ENCODE measurements at regions of chr18 and their contacts with region 1.

Region 1: GRCh38 chr18:22563098-22563707 is 145.5 kb upstream of the CTAGE1 start:
- DNase-seq: peak; percentile 68 to 84 (median 74)
- ATAC-seq: peak; percentile 78
- H3K4me3 ChIP-seq: no peak overlapping the region
- H3K27ac ChIP-seq: no peak overlapping the region
- H3K4me1 ChIP-seq: peaks cover 9 to 16% of the 10 kb centered on the region in 2 experiments
- H3K27me3 ChIP-seq: peaks cover 0 to 6% of the 10 kb centered on the region in 2 experiments; a peak in 2 of 5 replicates
- CTCF ChIP-seq: peak; percentile 85 to 93 (median 88)
- EP300 ChIP-seq: no peak
- POLR2A ChIP-seq: no peak
- RAD21 ChIP-seq: peak; percentile 97 to 100

Region 2: GRCh38 chr18:21897811-21898210 is 665.4 kb before region 1 on chr18:
- CTCF ChIA-PET with region 1: no interaction called
- POLR2A ChIA-PET with region 1: no interaction called
- in situ Hi-C with region 1: loop called (anchors 25 kb)
- intact Hi-C with region 1: loop called (anchors 5 kb)
- DNase-seq: peak; percentile 55 to 68 (median 60)
- ATAC-seq: peak; percentile 90
- H3K4me3 ChIP-seq: no peak overlapping the region
- H3K27ac ChIP-seq: no peak overlapping the region
- H3K4me1 ChIP-seq: peaks cover 0 to 6% of the 10 kb centered on the region in 2 experiments; a peak in 2 of 5 replicates
- H3K27me3 ChIP-seq: peaks cover 2 to 6% of the 10 kb centered on the region in 2 experiments; a peak in 2 of 5 replicates
- CTCF ChIP-seq: peak; percentile 77 to 80 (median 78)
- EP300 ChIP-seq: no peak
- POLR2A ChIP-seq: no peak
- RAD21 ChIP-seq: peak; percentile 36 to 82; a peak in 3 of 4 replicates

Region 3: DNA sequence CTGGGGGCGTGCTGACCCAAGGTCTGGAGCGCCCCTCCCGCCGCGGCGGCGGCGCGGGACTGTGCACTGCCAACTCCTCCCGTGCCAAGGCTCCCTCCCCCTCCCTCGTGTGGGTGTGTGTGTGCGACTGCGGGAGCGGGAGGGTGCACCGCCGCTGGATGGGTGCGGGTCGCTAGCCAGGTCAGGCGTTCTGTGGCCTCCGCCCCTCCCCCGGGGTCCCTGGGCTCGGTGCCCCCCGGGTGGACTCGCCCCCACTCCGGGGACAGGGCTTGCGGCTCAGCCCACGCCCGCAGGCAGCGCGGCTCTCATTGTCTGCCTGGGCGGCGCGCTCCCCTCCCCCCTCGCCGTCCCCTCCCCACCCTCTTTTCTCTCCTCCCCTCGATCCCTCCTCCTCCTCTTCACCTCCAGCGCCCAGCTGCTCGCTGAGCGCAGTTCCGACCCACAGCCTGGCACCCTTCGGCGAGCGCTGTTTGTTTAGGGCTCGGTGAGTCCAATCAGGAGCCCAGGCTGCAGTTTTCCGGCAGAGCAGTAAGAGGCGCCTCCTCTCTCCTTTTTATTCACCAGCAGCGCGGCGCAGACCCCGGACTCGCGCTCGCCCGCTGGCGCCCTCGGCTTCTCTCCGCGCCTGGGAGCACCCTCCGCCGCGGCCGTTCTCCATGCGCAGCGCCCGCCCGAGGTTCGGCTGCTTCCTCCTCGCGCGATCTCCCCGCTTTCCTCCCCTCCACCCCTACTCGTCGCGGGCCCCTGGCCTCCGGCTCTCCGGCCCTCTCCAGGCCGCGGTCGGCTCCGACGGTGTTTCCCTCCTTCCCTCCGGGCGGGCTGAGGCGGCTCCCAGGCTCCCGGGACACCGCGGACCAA is 394.0 kb before region 1 on chr18 and contains the start of gene GATA6:
- CTCF ChIA-PET with region 1: no interaction called
- POLR2A ChIA-PET with region 1: no interaction called
- in situ Hi-C with region 1: no loop called
- intact Hi-C with region 1: loop called (anchors 2 kb)
- DNase-seq: peak; percentile 73 to 80 (median 76)
- ATAC-seq: peak; percentile 93
- H3K4me3 ChIP-seq: peak within 1 kb of the TSS; percentile 45
- H3K27ac ChIP-seq: no peak within 1 kb of the TSS
- H3K4me1 ChIP-seq: peaks cover 11 to 34% of the 10 kb centered on the region in 2 experiments
- H3K27me3 ChIP-seq: peaks cover 45 to 66% of the 10 kb centered on the region in 2 experiments
- CTCF ChIP-seq: peak; percentile 54 to 79 (median 63)
- EP300 ChIP-seq: no peak
- POLR2A ChIP-seq: no peak
- RAD21 ChIP-seq: peak; percentile 45 to 78
- polyA plus RNA-seq, gene GATA6: 0.01 TPM in 1 of 2 experiments, not detected in the other

Region 4: DNA sequence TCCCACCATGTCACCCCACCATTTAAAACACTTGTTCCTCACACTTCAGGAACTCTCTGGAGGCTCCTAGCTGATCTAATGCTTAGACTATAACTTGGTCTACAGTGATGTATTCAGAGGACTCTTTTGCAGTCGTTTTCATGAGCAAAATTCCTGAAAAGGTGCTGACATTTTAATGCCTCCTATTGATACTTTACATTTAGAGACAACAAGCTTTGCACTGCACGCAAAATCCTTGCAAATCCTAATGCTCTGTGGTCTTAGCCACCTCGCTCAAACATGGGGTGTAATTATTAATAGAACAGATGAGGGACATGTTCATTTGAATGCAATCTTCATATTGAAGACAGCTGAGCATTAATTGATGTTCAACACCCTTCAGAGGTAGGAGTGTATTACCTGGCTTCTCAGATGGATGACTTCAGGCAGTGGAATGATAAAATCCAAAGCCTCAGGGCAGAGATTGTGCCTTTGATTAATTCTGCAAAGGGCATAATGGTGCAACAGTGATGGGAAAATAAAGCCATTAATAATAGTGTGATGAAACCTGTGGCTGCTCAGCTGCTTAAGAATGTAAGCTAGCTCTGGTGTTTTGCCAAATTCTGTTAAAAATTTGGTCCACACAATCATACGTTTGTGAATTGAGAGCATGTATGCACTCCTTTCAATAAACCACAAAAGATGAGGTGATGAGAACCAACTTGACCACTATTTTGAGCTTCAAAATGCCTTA is 150.9 kb before region 1 on chr18:
- CTCF ChIA-PET with region 1: no interaction called
- POLR2A ChIA-PET with region 1: no interaction called
- in situ Hi-C with region 1: no loop called
- intact Hi-C with region 1: loop called (anchors 10 kb)
- DNase-seq: no peak
- ATAC-seq: no peak
- H3K4me3 ChIP-seq: no peak overlapping the region
- H3K27ac ChIP-seq: no peak overlapping the region
- H3K4me1 ChIP-seq: no peaks in the 10 kb centered on the region
- H3K27me3 ChIP-seq: peaks cover 9 to 20% of the 10 kb centered on the region in 2 experiments; a peak in 3 of 5 replicates
- CTCF ChIP-seq: no peak
- EP300 ChIP-seq: no peak
- POLR2A ChIP-seq: no peak
- RAD21 ChIP-seq: no peak

Region 5: GRCh38 chr18:22465859-22466457 is 97.2 kb before region 1 on chr18:
- CTCF ChIA-PET with region 1: no interaction called
- POLR2A ChIA-PET with region 1: interaction called, 3 read pairs
- in situ Hi-C with region 1: no loop called
- intact Hi-C with region 1: loop called (anchors 5 kb)
- DNase-seq: peak; percentile 79 to 87 (median 82)
- ATAC-seq: peak; percentile 95
- H3K4me3 ChIP-seq: no peak overlapping the region
- H3K27ac ChIP-seq: peak overlapping the region; percentile 57
- H3K4me1 ChIP-seq: peaks cover 8 to 46% of the 10 kb centered on the region in 2 experiments
- H3K27me3 ChIP-seq: peaks cover 0 to 3% of the 10 kb centered on the region in 2 experiments; a peak in 2 of 5 replicates
- CTCF ChIP-seq: no peak
- EP300 ChIP-seq: peak; percentile 61
- POLR2A ChIP-seq: no peak
- RAD21 ChIP-seq: no peak; a peak in 1 of 4 replicates

Measured in K562 (cell line).